ENCODE measurements at regions of chr20 and their contacts with region 1.

Region 1: DNA sequence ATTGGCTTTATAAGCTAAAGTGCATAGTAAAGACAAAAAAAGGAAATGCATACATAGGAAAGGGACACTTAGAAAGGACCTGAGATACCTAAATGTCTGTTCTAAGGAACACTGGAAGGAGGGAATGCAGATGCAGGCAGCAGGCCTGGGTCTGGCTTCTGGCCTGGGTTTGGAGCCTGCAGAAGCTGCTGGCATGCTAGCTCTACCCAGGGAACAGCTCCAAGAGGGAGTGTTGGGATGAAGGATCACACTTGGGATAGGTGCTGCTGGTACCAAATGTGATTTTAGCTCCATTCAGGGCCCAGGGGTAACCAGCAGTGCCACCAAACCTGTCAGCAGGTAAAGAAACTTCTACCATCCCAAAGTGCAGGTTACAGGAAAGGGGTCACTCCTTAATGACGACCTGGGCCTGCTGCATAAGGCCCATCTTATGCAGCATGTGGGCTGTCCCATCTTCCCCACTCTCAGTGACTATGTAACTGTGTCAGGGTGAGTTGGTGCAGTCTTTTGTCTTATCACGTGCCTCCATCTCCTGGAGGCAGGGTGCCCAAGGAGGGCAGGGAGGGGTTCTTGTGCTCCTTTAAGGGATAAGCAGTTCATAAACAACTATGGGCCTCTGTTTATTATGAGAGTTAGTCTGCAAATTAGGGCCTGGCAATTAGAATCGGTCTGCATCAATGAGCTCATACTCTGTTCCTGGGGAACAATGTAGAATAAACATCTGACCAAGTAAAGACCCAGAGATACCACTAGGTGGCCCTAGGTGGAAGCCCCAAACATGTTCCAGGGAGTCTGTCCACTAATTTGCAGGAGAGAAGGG is 26.9 kb downstream of the DDX27 start:
- DNase-seq: no peak
- H3K4me3 ChIP-seq: no peak overlapping the region
- H3K27ac ChIP-seq: no peak overlapping the region
- H3K4me1 ChIP-seq: no peaks in the 10 kb centered on the region
- H3K27me3 ChIP-seq: no peaks in the 10 kb centered on the region
- CTCF ChIP-seq: peak; percentile 22 to 66 (median 59)
- POLR2A ChIP-seq: no peak

Region 2: DNA sequence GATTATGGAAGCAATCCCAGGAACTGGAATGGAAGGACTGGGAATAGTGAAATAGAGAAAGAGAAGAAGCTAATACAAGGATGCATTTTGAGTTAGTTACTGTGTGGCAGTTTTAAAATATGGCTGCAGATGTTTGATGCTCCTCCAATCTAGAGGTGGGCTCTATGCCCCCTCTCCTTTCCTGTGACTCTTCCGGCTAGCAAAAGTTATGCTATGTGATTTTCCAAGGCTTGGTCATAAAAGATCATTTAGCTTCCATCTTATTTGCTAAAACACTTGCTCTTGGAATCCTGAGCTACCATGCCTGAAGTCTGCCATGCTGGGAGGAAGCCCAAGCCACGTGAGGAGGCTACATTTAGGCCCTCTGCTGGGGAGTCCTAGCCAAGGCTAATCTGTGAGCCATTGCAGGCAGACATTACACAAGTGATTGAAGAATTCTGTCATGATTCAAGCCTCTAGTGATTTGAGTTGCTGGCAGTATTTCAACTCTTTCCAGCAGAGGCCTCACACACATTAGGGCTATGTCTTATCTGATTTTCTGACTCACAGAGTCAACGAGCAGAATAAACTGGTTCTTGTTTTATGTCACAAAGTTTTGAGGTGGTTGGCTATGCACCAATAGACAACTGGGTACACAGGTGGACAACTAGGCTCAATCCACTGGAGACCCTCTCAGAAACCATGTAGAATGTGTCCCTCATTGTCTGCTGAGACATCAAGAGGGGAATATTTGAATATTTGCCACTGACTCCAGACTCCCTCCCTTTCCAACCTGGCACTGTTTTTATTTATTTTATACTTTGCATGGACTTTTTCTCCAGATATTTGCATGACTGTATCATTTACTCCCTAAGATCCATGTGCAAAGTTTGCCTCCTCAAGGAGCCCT is 1233.7 kb before region 1 on chr20:
- intact Hi-C with region 1: no loop called
- DNase-seq: no peak
- H3K4me3 ChIP-seq: no peak overlapping the region
- H3K27ac ChIP-seq: no peak overlapping the region
- H3K4me1 ChIP-seq: no peaks in the 10 kb centered on the region
- H3K27me3 ChIP-seq: no peaks in the 10 kb centered on the region
- CTCF ChIP-seq: no peak
- POLR2A ChIP-seq: no peak

Region 3: DNA sequence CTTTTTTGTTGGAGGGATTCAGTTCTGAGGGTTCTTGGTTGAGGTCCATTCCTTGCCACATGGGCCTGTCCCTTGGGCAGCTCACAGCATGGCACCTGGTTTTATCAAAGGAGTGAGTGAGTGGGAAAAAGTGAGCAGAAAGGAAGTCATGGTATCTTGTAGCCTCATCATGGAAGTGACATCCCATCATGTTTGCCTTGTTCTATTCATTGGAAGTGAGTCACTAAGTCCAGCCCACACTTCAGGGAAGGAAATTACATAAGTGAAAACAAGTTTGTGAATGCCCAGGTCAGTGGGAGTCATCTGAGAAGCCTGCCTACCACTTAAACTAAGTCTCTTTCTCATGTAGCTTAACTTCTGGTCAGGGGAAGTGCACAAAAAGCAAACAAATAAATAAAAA is 64.6 kb after region 1 on chr20:
- intact Hi-C with region 1: no loop called
- DNase-seq: no peak
- H3K4me3 ChIP-seq: no peak overlapping the region
- H3K27ac ChIP-seq: no peak overlapping the region
- H3K4me1 ChIP-seq: no peaks in the 10 kb centered on the region
- H3K27me3 ChIP-seq: no peaks in the 10 kb centered on the region
- CTCF ChIP-seq: no peak
- POLR2A ChIP-seq: no peak

Region 4: DNA sequence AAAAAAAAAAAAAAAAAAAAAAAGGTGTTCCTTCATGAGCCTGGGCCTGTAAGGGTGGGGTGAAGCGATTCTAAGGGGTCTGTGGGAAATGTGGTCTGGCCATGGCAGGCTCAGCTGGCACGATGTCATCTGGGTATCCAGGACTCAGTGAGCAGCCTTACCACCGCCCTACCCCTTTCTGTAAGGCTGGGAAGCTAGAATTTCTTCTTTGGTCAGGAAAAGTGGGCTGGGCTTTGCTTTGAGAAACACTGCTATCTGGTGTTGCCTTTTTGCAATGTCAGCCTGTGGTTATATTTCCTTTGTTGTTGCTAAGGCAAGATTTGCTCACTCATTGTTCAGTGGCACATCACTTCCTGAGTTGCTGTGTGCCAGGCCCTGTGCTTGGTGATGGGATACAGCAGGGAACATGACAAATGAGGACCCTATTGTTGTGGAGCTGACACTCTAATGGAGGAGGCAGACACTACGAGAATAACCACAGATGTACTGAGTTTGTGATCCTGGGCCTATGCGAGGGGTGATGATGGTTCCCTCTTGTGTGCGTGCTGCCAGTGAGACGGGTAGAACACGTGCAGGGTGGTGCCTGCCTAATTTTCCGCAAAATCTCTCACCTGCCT is 77.6 kb after region 1 on chr20:
- intact Hi-C with region 1: loop called (anchors 10 kb)
- DNase-seq: no peak
- H3K4me3 ChIP-seq: no peak overlapping the region
- H3K27ac ChIP-seq: no peak overlapping the region
- H3K4me1 ChIP-seq: peaks cover under 1% of the 10 kb centered on the region
- H3K27me3 ChIP-seq: no peaks in the 10 kb centered on the region
- CTCF ChIP-seq: peak in 1 of 3 experiments; percentile 24
- POLR2A ChIP-seq: no peak